Posterior vena cava (tissue), 2 donors: ENCODE measurements at regions of chr10 and their contacts with region 1.

Region 1: GRCh38 chr10:35246770-35247343 is 89.5 kb upstream of the CCNY start:
- DNase-seq: no peak

Region 2: DNA sequence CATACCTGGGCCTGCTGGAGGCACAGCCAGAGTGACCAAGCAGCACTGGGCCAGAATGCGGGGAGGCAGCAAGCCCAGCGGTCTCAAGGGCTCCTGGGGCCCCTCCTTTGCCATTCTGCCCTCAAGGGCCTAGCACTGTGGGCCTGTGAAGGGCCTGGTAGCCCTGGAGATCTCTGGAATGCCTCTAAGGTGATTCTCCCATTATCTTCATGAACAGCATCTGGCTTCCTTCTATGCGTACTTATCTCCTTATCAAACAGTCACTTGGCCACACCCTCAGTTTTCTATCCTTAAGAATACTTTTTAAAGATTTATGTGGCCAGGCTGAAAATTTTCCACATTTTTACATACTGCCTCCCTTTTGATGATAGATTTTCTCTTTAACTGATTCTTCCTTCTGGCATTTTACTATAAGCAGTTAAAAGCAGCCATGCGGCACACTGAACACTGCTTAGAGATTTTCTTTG is 22.0 kb after region 1 on chr10:
- intact Hi-C with region 1: loop called in 1 of 2 experiments (anchors 1 kb)
- DNase-seq: no peak